ENCODE measurements at regions of chr7 and their contacts with region 1.

Region 1: GRCh38 chr7:135662373-135663114 is at the start of gene STMP1:
- DNase-seq: peak; percentile 96 to 98
- ATAC-seq: peak; percentile 98 to 99 (median 98)
- H3K4me3 ChIP-seq: peak within 1 kb of the TSS; percentile 72 to 98 (median 82)
- H3K27ac ChIP-seq: peak within 1 kb of the TSS; percentile 92 to 99 (median 94)
- H3K4me1 ChIP-seq: peaks cover 6 to 56% (median 43%) of the 10 kb centered on the region in 9 donors
- H3K27me3 ChIP-seq: no peaks in the 10 kb centered on the region
- CTCF ChIP-seq: peak in 6 of 9 donors; percentile 82 to 93 (median 89)
- total RNA-seq, gene STMP1: 26.5 to 35.6 (median 28.6) TPM

Region 2: GRCh38 chr7:135795846-135796570 is 133.5 kb after region 1 on chr7:
- intact Hi-C with region 1: loop called in 2 of 10 experiments (anchors 1 to 10 kb)
- DNase-seq: no peak
- ATAC-seq: peak in 1 of 8 donors; percentile 34
- H3K4me3 ChIP-seq: no peak overlapping the region
- H3K27ac ChIP-seq: peak overlapping the region in 4 of 10 donors; percentile 34 to 57 (median 45)
- H3K4me1 ChIP-seq: peaks cover 0 to 35% (median 13%) of the 10 kb centered on the region in 9 donors
- H3K27me3 ChIP-seq: no peaks in the 10 kb centered on the region
- CTCF ChIP-seq: no peak

Region 3: GRCh38 chr7:135801045-135801693 is 138.6 kb after region 1 on chr7:
- intact Hi-C with region 1: loop called in 2 of 10 experiments (anchors 1 to 10 kb)
- DNase-seq: peak in 1 of 2 donors; percentile 50
- ATAC-seq: peak; percentile 51 to 75 (median 64)
- H3K4me3 ChIP-seq: peak overlapping the region in 4 of 10 donors; percentile 11 to 14 (median 13)
- H3K27ac ChIP-seq: no peak overlapping the region
- H3K4me1 ChIP-seq: peaks cover 2 to 27% (median 13%) of the 10 kb centered on the region in 9 donors
- H3K27me3 ChIP-seq: no peaks in the 10 kb centered on the region
- CTCF ChIP-seq: peak; percentile 77 to 96 (median 87)

Region 4: GRCh38 chr7:135977007-135977741 is 314.6 kb after region 1 on chr7 and contains the start of gene MTPN:
- intact Hi-C with region 1: loop called in 1 of 10 experiments (anchors 10 kb)
- DNase-seq: peak; percentile 99
- ATAC-seq: peak; percentile 98 to 100 (median 100)
- H3K4me3 ChIP-seq: peak within 1 kb of the TSS; percentile 74 to 99 (median 94)
- H3K27ac ChIP-seq: peak within 1 kb of the TSS in 9 of 10 donors; percentile 80 to 95 (median 90)
- H3K4me1 ChIP-seq: peaks cover 3 to 88% (median 64%) of the 10 kb centered on the region in 9 donors
- H3K27me3 ChIP-seq: no peaks in the 10 kb centered on the region
- CTCF ChIP-seq: no peak
- total RNA-seq, gene MTPN: 63.3 to 107 (median 84.7) TPM

Region 5: GRCh38 chr7:136009488-136010079 is 347.0 kb after region 1 on chr7:
- intact Hi-C with region 1: loop called in 3 of 10 experiments (anchors 5 to 10 kb)
- DNase-seq: no peak
- ATAC-seq: no peak
- H3K4me3 ChIP-seq: no peak overlapping the region
- H3K27ac ChIP-seq: no peak overlapping the region
- H3K4me1 ChIP-seq: peaks cover 0 to 2% (median 0%) of the 10 kb centered on the region in 9 donors
- H3K27me3 ChIP-seq: no peaks in the 10 kb centered on the region
- CTCF ChIP-seq: peak; percentile 58 to 88 (median 77)

Measured in heart right ventricle (tissue), 16 donors.